Right ventricle myocardium inferior (tissue), 1 donor: ENCODE measurements at regions of chr5 and their contacts with region 1.

Region 1: DNA sequence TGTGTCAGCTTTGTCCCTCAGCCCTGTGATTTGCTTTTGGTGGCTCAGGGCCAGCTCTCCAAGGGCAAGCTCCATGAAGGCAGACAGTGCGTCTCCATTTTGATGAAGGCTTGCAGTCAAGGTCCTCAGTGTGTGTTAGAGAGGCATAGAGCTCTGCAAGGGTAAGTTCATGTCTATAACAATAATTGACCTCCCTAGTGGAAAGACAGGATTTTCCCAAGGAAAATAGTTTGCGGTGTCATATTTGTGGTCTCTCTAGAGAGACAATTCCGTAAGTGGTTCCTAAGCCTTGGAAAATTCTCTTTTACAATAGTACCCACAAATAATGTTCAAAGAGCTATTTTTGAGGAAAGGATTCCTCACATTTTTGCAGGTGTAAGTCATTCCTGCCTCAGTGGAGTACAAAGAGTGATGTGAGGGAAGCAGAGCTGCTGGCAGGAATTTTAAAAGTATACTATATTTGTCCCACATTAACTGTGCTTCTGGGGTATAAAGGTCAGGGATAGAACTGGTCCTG is 40.2 kb downstream of the SLC1A3 start:
- DNase-seq: no peak
- ATAC-seq: peak; percentile 37

Region 2: DNA sequence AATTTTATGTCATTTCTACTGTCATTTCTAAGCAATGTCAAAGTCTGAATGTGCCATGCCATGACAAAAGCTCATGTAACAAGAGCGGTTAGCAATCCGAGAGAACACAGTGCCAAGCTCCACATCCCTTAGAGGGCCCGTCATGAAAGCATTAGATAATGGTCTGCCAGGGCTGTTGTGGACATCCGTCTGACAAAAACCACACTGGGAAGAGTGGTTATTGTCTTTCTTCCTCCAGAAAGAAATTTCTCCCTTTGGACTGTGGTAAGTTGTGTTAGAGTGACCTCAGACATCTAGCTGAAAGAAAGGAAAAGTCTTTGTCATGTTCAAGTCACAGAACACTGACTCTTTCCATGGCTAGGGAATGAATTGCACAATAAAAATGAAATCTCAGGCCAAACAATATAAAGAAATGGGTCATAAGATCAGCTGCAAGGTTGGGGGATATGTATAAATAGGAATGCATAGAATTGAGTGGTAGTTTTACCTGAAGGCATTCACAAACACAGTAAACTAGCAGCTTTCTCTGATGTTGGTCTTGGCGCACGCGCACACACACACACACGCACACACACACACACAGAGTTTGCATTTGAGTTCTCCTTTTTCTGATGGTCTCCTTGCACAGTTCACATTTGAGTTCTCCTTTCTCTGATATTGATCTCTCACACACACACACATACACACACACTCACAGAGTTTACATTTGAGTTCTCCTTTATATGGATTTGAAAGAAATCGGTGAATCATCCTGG is 34.9 kb before region 1 on chr5:
- intact Hi-C with region 1: loop called (anchors 5 kb)
- DNase-seq: no peak
- ATAC-seq: peak; percentile 39